Caco-2 (cell line): ENCODE measurements at regions of chr17 and their contacts with region 1.

Region 1: DNA sequence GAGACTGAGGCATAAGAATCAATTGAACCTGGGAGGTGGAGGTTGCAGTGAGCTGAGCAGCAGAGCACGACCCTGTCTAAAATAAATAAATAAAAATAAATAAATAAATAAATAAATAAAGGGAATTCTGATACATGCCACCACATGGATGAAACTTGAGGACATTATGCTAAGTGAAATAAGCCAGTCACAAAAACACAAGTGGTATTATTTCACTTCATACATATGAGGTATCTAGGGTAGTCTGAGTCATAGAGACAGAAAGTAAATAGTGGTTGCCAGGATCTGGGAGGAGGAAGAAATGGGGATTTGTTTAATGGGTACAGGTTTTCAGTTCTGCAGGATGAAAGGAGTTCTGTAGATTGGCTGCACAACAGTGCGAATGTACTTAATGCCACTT is 16.3 kb downstream of the PIPOX start:
- DNase-seq: no peak
- H3K4me3 ChIP-seq: no peak overlapping the region
- H3K4me3 Mint-ChIP-seq: no peak overlapping the region
- H3K27ac Mint-ChIP-seq: no peak overlapping the region
- H3K4me1 ChIP-seq: no peaks in the 10 kb centered on the region
- H3K4me1 Mint-ChIP-seq: no peaks in the 10 kb centered on the region
- H3K27me3 ChIP-seq: no peaks in the 10 kb centered on the region; the same call in 1 of the 2 replicates
- H3K27me3 Mint-ChIP-seq: peaks cover 11% of the 10 kb centered on the region
- CTCF ChIP-seq: no peak

Region 2: GRCh38 chr17:29019475-29020181 is 39.7 kb before region 1 on chr17:
- CTCF ChIA-PET with region 1: no interaction called
- POLR2A ChIA-PET with region 1: no interaction called
- intact Hi-C with region 1: loop called (anchors 5 kb)
- DNase-seq: no peak
- H3K4me3 ChIP-seq: no peak overlapping the region
- H3K4me3 Mint-ChIP-seq: no peak overlapping the region
- H3K27ac Mint-ChIP-seq: no peak overlapping the region
- H3K4me1 ChIP-seq: no peaks in the 10 kb centered on the region
- H3K4me1 Mint-ChIP-seq: no peaks in the 10 kb centered on the region
- H3K27me3 ChIP-seq: no peaks in the 10 kb centered on the region
- H3K27me3 Mint-ChIP-seq: peaks cover 18% of the 10 kb centered on the region
- CTCF ChIP-seq: no peak

Region 3: DNA sequence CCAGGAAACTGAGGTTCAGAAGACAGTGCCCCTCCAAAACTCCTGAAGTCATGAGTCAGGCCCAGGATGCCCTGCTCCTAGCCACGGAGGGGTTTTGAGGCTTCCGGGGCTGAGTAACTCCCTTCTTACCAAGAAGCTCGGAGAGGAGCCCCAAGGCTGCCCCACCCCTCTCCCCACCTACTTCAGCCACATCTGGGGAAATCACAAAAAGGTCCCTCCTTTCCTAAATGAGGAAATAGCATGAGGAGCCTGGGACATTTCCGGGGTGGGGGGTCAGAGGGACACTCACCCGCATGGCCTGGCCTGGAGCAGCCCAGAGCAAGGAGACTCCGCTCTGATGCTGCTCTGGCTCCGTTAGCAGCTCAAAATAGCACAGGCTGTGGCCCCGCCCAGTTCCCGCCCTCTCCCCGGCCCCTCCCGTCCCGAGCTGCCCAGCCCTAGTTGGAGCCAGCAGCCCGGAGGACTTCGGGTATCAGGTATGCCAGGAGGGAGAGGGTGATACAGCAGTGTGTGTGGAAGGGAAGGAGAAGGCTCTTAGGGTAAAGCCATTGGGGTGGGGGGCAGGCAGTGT is 80.9 kb after region 1 on chr17:
- CTCF ChIA-PET with region 1: no interaction called
- POLR2A ChIA-PET with region 1: no interaction called
- intact Hi-C with region 1: no loop called
- DNase-seq: no peak
- H3K4me3 ChIP-seq: no peak overlapping the region
- H3K4me3 Mint-ChIP-seq: no peak overlapping the region
- H3K27ac Mint-ChIP-seq: no peak overlapping the region
- H3K4me1 ChIP-seq: peaks cover 8% of the 10 kb centered on the region; the same call in 1 of the 2 replicates
- H3K4me1 Mint-ChIP-seq: no peaks in the 10 kb centered on the region
- H3K27me3 ChIP-seq: no peaks in the 10 kb centered on the region
- H3K27me3 Mint-ChIP-seq: no peaks in the 10 kb centered on the region
- CTCF ChIP-seq: no peak